Aorta (tissue), 5 donors: ENCODE measurements at regions of chr1 and their contacts with region 1.

Region 1: GRCh38 chr1:207050768-207051614 is at the start of gene YOD1:
- DNase-seq: peak; percentile 96 to 98
- ATAC-seq: peak; percentile 92
- H3K4me3 ChIP-seq: peak within 1 kb of the TSS; percentile 67 to 84
- H3K27ac ChIP-seq: peak within 1 kb of the TSS; percentile 4 to 58
- H3K4me1 ChIP-seq: peaks cover 0 to 3% of the 10 kb centered on the region in 2 donors
- H3K27me3 ChIP-seq: no peaks in the 10 kb centered on the region
- total RNA-seq, gene YOD1: 5.5 to 6.6 TPM

Region 2: DNA sequence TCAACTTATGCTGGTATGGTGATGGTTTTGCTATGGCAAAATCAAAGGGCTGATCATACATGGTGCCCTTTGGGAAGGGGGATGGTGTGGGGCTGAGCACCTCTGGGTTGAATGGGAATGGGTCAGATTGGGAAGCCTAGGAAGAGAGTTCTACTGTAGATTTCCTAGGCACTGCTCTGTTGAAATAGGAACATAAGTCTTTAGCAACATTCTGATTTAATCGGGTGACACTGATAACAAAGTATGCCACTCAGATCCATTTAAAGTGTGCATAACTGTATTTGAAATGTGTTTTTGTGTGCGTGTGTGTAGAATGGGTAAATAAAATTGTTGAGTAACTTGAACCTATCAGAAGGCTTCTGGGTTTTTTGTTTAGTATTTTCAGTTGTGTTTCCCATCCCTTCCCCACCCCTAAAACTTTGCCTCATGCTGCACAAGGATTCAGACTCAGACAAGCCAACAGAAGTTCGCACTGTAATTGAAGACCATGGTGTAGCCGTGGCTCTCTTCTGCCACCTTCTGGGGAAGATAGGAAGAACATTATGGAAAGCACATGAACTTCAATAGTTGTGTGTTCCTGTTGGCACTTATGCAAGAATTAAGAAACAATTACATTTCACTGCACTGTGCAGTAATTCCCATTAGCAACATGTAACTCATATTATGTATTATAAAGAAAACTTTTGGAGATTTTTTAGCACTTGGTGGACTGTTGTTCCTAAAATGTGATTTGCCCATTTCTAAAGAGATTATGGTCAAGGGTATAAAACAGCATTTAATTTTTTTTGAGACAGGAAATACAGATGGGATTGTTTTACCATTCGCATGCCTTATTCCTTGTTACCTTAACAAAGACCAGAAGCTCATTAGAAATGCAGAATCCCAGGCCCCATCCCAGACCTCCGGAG is 26.7 kb after region 1 on chr1:
- intact Hi-C with region 1: loop called in 1 of 2 experiments (anchors 1 kb)
- DNase-seq: no peak
- ATAC-seq: peak; percentile 94
- H3K4me3 ChIP-seq: no peak overlapping the region
- H3K27ac ChIP-seq: no peak overlapping the region
- H3K4me1 ChIP-seq: no peaks in the 10 kb centered on the region
- H3K27me3 ChIP-seq: no peaks in the 10 kb centered on the region